ENCODE measurements at regions of chr21 and their contacts with region 1.

Region 1: DNA sequence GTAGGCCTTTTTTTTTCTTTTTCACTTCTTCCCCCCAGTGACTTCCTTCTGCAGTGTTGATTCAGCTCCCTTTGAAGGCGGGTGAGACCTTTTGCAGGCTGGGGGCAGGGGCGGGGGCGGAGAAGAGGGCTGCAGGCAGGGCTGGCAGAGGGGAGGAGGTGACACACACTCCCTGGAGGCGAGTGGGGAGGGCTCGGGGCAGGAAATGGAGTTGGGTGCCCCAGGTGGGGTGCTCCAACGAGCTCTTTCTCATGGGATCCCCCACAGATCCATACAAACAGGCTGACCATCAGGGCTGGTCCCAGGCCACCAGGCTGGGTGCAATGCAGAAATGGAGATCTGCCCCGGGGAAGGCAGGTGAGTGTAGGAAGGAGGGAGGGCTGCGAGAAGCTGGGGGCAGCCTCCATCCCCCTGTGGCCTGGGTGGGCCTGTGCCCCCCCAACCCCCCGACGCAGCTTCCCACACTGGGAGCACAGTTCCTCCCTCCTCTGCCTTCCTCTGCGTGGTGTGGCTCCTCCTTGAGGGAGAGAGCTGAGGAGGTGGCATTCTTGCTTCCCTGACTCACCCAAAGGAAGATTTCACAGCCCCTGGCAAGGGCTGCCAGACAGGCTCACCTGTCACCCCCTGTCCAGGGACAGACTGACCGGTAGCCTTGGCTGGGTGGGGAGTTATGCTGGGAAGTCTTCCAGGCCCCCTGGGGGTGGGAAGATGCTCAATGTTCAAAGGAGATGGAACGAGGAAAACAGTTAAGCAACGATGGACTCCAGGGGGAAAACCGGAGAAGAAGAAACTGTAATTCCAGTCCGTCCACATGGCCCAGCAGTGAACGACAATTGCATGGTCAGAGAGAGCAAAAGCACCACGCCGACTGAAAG is 7.1 kb upstream of the ITGB2 start:
- DNase-seq: peak; percentile 91
- H3K4me3 Mint-ChIP-seq: peak overlapping the region; percentile 94
- H3K27ac Mint-ChIP-seq: peak overlapping the region; percentile 99
- H3K4me1 Mint-ChIP-seq: peaks cover 78% of the 10 kb centered on the region
- H3K27me3 Mint-ChIP-seq: no peaks in the 10 kb centered on the region

Region 2: DNA sequence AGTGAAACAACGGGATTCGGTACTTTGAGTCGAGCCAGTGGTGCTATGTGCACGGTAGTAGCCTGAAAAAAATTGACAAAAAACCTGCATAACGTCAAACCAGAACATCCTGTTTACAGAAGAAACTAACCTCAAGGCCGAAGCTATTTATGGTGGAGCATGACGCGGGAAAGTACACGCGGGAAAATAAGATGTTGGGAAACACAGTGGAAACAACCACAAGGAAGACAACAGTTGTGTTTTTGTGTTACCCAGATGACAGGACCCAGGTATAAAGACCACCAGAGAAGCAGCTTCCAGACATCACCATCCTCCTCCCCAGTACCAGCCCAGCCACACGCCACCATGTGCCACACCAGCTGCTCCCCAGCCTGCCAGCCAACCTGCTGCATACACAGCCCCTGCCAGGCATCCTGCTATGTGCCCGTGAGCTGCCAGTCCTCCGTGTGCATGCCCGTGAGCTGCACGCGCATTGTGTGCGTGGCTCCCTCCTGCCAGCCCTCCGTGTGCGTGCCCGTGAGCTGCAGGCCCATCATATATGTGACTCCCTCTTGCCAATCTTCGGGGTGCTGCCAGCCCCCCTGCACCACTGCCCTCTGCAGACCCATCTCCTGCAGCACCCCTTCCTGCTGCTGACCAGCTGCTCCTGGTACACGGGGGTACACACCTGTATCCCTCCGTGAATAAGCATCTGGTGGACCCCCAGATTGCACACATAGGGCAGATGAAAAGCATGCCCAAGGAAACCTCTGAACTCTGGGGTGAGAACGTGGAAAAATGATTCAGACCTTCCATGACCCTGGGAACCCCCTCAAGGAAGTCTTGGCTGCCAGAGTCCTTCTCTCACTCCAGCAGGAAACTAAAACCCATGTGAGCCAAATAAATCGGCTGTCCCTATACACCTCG is 269.9 kb before region 1 on chr21 and contains the start of gene KRTAP12-3:
- intact Hi-C with region 1: loop called (anchors 10 kb)
- DNase-seq: peak; percentile 87
- H3K4me3 Mint-ChIP-seq: peak within 1 kb of the TSS; percentile 56
- H3K27ac Mint-ChIP-seq: peak within 1 kb of the TSS; percentile 91
- H3K4me1 Mint-ChIP-seq: peaks cover 44% of the 10 kb centered on the region
- H3K27me3 Mint-ChIP-seq: peaks cover 6% of the 10 kb centered on the region
- total RNA-seq, gene KRTAP12-3: not detected in 2 replicates

Region 3: DNA sequence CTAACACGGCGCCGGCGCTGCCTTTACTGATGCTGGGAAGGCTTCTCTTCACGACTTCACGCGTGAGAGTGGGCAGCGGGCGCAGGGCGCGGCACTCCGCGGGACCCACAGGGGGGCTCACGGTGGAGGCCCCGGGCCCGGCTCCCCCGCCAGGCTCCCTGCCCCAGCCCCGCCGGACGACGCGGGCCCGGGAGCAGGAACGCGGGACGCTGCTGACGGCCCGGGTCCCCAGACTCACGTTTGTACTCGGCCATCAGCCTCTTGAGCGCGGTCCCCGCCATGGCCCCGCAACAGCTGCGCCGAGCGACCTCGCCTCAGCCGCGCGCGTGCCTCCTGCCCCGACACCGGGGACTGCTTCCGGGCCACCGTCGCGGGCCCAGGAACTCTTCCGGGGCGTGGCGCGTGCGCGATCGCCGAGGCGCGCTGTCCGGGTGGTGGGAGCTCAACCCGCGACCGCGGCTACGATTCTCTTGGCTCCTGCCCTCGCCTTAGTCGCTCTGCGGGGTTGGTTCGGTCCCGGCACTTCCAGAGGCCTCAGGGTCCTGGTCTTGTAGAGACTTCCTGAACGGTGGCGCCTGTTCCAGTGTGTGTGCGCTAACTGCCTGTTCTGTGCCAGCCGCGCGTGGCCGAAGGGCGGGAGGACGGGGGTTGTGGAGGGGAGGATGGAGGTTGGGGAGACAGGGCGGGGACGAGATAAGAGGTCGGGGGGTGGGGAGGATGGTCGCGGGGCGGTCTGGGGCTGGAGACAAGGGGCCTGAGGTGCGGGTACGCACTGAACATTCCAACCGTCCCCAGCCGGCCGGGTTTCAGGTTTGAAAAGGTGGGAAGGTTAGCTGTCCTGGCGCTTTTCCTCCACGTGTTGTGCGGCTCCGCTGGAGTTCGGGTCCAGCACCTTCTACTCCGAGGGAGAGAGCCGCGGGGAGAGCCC is 126.1 kb before region 1 on chr21 and contains the start of gene UBE2G2:
- intact Hi-C with region 1: loop called (anchors 1 kb)
- DNase-seq: peak; percentile 97
- H3K4me3 Mint-ChIP-seq: peak within 1 kb of the TSS; percentile 100
- H3K27ac Mint-ChIP-seq: peak within 1 kb of the TSS; percentile 93
- H3K4me1 Mint-ChIP-seq: peaks cover 37% of the 10 kb centered on the region
- H3K27me3 Mint-ChIP-seq: no peaks in the 10 kb centered on the region
- total RNA-seq, gene UBE2G2: 143 and 148 TPM in 2 replicates

Region 4: DNA sequence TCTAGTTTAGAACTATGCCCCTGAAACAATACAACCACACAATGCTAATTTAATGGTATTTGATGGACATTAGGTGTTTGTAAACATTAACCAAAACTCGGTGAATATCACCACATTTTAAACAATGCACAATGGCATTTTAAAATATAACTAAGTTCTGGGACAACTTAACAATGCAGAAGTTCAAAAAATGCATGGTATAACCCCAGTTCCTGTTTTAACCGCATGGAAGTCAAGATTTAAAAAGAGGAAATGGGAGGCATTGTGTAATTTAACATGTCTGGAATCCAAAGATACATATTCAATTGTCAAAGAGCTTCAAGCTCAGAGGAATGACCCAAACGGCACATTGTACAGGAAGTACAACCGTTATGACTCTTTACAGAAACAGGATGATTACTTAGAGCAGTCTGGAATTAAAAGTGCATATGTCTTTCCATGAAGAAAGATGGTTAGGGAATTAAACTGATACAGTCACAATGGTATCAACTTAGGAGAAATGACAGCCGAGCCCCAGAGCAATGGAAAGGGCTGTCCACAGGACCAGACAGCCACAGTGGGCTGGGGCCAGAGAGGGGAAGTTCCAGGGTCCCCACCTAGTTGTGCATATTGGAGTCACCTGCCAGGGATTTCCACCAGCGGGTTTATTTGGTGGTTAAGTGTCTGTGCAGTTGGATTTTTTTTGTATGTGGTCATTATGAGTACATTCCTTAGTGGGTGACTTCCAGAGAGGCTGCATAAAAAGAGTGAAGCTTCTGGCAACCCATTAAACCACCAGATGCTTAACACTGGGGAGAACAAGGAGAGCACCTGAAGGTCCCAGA is 46.9 kb before region 1 on chr21:
- intact Hi-C with region 1: no loop called
- DNase-seq: peak; percentile 71
- H3K4me3 Mint-ChIP-seq: peak overlapping the region; percentile 18
- H3K27ac Mint-ChIP-seq: peak overlapping the region; percentile 76
- H3K4me1 Mint-ChIP-seq: peaks cover 24% of the 10 kb centered on the region
- H3K27me3 Mint-ChIP-seq: no peaks in the 10 kb centered on the region

Region 5: GRCh38 chr21:44892536-44893277 is 35.1 kb before region 1 on chr21:
- intact Hi-C with region 1: loop called (anchors 1 kb)
- DNase-seq: peak; percentile 94
- H3K4me3 Mint-ChIP-seq: no peak overlapping the region
- H3K27ac Mint-ChIP-seq: peak overlapping the region; percentile 54
- H3K4me1 Mint-ChIP-seq: peaks cover 6% of the 10 kb centered on the region
- H3K27me3 Mint-ChIP-seq: no peaks in the 10 kb centered on the region

Region 6: DNA sequence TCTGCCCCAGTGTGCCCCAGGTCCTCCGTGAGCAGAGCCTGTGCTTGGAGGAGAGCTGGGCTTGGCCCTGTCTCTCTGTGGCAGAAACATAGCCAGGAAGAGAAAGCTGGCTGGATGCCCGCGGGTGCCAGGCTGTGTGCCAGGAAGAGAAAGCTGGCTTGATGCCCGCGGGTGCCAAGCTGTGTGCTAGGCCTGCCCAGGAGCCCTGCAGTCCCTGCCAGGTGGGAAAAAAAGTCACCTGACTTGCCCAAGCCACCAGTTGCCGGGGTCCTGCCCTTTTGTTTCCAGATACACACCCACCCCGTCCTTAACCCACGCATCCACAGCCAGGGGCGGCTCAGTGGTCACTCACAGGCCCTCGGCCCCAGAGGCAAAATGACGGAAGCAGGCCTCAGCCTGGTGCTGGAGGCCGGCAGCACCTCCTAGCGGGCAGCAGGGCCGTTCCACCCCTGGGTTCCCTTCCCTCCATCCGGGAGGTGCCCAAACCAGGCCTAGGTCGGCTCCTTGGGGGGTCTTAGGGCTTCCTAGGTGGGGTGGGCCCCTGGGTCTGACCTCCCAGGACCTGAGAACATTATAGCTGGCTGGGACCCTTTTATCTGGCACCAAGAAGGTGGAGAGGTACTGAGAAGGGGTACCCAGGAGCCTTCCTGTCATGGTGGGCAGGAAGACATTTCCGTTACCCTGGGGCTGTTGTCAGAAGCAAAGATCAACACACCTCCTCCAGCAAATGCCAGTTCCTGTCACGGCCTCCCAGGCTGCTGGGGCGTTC is 16.3 kb before region 1 on chr21:
- intact Hi-C with region 1: loop called (anchors 1 kb)
- DNase-seq: peak; percentile 86
- H3K4me3 Mint-ChIP-seq: peak overlapping the region; percentile 67
- H3K27ac Mint-ChIP-seq: peak overlapping the region; percentile 76
- H3K4me1 Mint-ChIP-seq: peaks cover 55% of the 10 kb centered on the region
- H3K27me3 Mint-ChIP-seq: no peaks in the 10 kb centered on the region

Region 7: GRCh38 chr21:45074818-45075595 is 147.2 kb after region 1 on chr21:
- intact Hi-C with region 1: loop called (anchors 5 kb)
- DNase-seq: peak; percentile 79
- H3K4me3 Mint-ChIP-seq: peak overlapping the region; percentile 83
- H3K27ac Mint-ChIP-seq: peak overlapping the region; percentile 84
- H3K4me1 Mint-ChIP-seq: peaks cover 47% of the 10 kb centered on the region
- H3K27me3 Mint-ChIP-seq: peaks cover 3% of the 10 kb centered on the region